ENCODE measurements at regions of chr6 and their contacts with region 1.

Region 1: GRCh38 chr6:119349323-119350042 is at the start of gene MAN1A1:
- DNase-seq: peak; percentile 78
- H3K4me3 Mint-ChIP-seq: peak within 1 kb of the TSS; percentile 71
- H3K27ac Mint-ChIP-seq: peak within 1 kb of the TSS; percentile 1
- H3K4me1 Mint-ChIP-seq: peaks cover 7% of the 10 kb centered on the region
- H3K27me3 Mint-ChIP-seq: no peaks in the 10 kb centered on the region
- CTCF ChIP-seq: no peak
- total RNA-seq, gene MAN1A1: 1.3 and 1.6 TPM in 2 replicates

Region 2: DNA sequence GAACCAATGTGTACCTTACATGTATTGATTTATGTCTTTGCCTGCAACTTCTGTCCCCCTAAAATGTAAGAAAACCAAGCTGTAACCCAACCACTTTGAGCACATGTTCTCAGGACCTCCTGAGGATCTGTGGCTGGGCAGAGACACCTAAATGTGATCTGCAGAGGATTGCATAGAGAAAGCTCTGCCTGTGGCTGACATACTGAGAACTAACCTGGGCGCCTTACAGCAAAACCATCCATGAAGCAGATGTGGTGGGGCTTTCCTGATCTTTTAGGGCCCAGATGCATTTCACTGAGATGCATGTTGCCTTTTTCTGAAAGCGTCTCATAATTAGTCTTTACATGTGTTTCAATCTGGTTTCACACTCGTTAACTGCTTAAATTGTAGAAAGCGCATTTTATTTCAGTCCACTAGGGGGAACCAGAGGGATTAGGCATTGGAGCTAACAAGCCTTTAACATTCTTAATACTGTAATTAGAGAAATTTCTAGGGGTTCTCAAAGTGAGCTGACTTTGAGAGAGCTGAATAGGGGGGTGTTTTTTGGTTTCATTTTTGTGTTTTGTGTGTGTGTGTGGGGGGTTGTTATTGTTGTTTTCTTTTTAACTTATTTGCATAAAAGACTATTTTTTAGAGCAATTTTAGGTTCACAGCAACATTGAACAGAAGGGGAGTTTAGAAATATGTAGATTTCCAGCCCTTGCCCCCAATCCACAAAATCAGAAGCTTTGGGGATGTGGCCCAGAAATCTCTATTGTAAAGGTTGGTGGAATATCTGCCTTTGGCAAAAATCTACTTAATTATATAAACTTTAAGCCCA is 220.1 kb before region 1 on chr6:
- CTCF ChIA-PET with region 1: no interaction called
- POLR2A ChIA-PET with region 1: no interaction called
- intact Hi-C with region 1: loop called (anchors 5 kb)
- DNase-seq: peak; percentile 81
- H3K4me3 Mint-ChIP-seq: no peak overlapping the region
- H3K27ac Mint-ChIP-seq: peak overlapping the region; percentile 66
- H3K4me1 Mint-ChIP-seq: peaks cover 21% of the 10 kb centered on the region
- H3K27me3 Mint-ChIP-seq: no peaks in the 10 kb centered on the region
- CTCF ChIP-seq: peak; percentile 72

Region 3: GRCh38 chr6:119241111-119241465 is 108.4 kb before region 1 on chr6:
- CTCF ChIA-PET with region 1: no interaction called
- POLR2A ChIA-PET with region 1: no interaction called
- intact Hi-C with region 1: no loop called
- DNase-seq: peak; percentile 13
- H3K4me3 Mint-ChIP-seq: no peak overlapping the region
- H3K27ac Mint-ChIP-seq: no peak overlapping the region
- H3K4me1 Mint-ChIP-seq: no peaks in the 10 kb centered on the region
- H3K27me3 Mint-ChIP-seq: no peaks in the 10 kb centered on the region
- CTCF ChIP-seq: no peak

Region 4: DNA sequence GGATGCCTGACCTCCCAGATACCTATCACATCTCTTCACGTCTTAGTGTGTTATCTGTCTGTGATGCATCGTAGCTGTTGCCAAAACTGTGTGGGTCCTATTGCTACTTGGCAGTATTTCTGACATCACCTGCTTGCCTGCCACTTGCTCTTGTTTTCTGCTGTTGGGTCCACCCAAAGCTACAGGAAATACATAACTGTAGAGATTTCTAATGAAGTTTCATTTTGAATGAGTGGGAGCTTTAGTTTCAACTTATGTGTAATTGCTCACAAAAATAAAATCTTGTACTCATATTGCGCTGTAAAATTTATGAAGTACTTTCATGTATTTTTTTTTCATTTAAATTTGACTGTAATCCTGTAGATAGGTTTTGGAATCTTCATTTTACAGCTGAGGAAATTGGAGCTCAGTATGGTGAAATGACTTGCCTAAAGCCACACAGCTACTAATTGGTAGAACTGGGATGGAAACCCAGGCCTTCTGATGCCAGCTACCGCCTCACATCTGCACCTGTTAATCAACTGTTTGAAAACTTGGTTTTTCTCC is 113.7 kb after region 1 on chr6:
- CTCF ChIA-PET with region 1: no interaction called
- POLR2A ChIA-PET with region 1: no interaction called
- intact Hi-C with region 1: no loop called
- DNase-seq: no peak
- H3K4me3 Mint-ChIP-seq: no peak overlapping the region
- H3K27ac Mint-ChIP-seq: no peak overlapping the region
- H3K4me1 Mint-ChIP-seq: no peaks in the 10 kb centered on the region
- H3K27me3 Mint-ChIP-seq: no peaks in the 10 kb centered on the region
- CTCF ChIP-seq: no peak

Region 5: GRCh38 chr6:119533603-119534279 is 184.3 kb after region 1 on chr6:
- CTCF ChIA-PET with region 1: no interaction called
- POLR2A ChIA-PET with region 1: no interaction called
- intact Hi-C with region 1: loop called (anchors 10 kb)
- DNase-seq: peak; percentile 71
- H3K4me3 Mint-ChIP-seq: no peak overlapping the region
- H3K27ac Mint-ChIP-seq: peak overlapping the region; percentile 13
- H3K4me1 Mint-ChIP-seq: peaks cover 14% of the 10 kb centered on the region
- H3K27me3 Mint-ChIP-seq: no peaks in the 10 kb centered on the region
- CTCF ChIP-seq: no peak

Region 6: GRCh38 chr6:119742188-119742803 is 392.8 kb after region 1 on chr6:
- CTCF ChIA-PET with region 1: interaction called, 6 read pairs
- POLR2A ChIA-PET with region 1: interaction called, 3 read pairs
- intact Hi-C with region 1: loop called (anchors 1 kb)
- DNase-seq: peak; percentile 63
- H3K4me3 Mint-ChIP-seq: no peak overlapping the region
- H3K27ac Mint-ChIP-seq: no peak overlapping the region
- H3K4me1 Mint-ChIP-seq: no peaks in the 10 kb centered on the region
- H3K27me3 Mint-ChIP-seq: no peaks in the 10 kb centered on the region
- CTCF ChIP-seq: peak; percentile 80

Region 7: DNA sequence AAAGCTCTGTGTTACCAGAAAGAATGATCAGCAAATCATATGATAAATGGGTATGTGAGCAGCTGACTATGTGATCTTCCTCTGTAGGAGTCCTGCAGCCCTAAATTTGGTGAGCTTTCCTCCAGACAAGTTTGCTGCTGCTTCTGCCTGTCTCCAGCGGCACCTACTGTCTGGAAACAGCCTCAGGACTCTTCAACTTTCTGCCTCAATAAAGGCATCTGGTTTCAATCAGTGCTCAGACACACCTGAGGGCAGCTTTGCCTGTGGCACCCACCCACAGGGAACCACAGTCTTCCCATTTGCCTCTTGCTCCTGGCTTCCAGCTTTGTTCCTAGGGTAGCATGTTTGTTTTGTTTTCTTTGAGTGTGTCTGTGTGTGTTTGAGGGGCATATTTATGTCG is 728.0 kb after region 1 on chr6:
- CTCF ChIA-PET with region 1: interaction called, 5 read pairs
- POLR2A ChIA-PET with region 1: interaction called, 3 read pairs
- intact Hi-C with region 1: loop called (anchors 1 kb)
- DNase-seq: peak; percentile 55
- H3K4me3 Mint-ChIP-seq: no peak overlapping the region
- H3K27ac Mint-ChIP-seq: no peak overlapping the region
- H3K4me1 Mint-ChIP-seq: peaks cover 5% of the 10 kb centered on the region
- H3K27me3 Mint-ChIP-seq: no peaks in the 10 kb centered on the region
- CTCF ChIP-seq: peak; percentile 30